ENCODE measurements at regions of chr11 and their contacts with region 1.

Region 1: GRCh38 chr11:93718057-93718563 is 23.2 kb downstream of the TAF1D start:
- DNase-seq: peak in 3 of 4 experiments; percentile 17 to 84 (median 80)
- ATAC-seq: peak; percentile 79
- H3K4me3 ChIP-seq: no peak overlapping the region
- H3K27ac ChIP-seq: peak overlapping the region; percentile 89
- H3K4me1 ChIP-seq: peaks cover 8 to 35% of the 10 kb centered on the region in 2 experiments
- H3K27me3 ChIP-seq: no peaks in the 10 kb centered on the region
- CTCF ChIP-seq: no peak
- EP300 ChIP-seq: peak; percentile 99
- POLR2A ChIP-seq: no peak
- RAD21 ChIP-seq: no peak; a peak in 1 of 4 replicates

Region 2: DNA sequence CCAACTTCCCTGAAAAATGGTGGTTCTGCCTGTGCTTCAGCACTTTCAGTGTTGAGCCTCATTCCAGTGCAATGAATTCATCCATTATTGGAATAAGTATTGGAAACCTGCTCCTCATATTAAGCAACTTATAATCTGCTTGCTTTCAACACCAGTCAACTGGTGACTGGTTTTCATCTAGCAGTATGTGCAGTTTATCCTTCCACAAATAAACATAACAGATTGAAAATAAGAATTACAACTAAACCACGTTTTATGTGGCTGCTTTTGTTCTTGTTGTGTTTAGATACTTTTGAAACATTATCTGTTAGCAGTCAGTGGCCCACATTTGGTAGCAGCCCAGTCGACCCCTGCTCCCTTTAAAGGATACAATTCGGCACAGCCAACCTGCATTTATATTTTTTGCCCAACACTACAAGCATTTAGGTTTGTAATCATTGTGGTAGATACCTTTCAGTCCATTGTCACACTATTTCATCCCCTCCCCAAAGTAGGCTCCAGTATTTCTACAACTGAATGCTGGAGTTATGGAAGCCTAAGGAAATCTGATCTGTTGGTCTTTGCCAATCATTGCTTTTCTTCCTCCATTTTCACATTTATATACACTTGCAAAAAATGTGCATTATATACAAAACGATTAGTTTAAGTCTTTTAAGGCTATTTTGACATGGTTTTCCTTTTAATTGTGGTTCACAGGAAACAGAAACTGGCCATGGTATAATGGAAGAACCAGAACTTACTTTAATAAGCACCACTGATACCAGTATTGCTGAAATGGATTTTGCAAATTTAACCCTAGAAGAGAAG is 10.1 kb after region 1 on chr11:
- CTCF ChIA-PET with region 1: no interaction called
- POLR2A ChIA-PET with region 1: interaction called, 13 read pairs
- in situ Hi-C with region 1: no loop called
- intact Hi-C with region 1: no loop called
- DNase-seq: no peak
- ATAC-seq: peak; percentile 18
- H3K4me3 ChIP-seq: no peak overlapping the region
- H3K27ac ChIP-seq: peak overlapping the region; percentile 21; the same call in 1 of the 3 replicates
- H3K4me1 ChIP-seq: no peaks in the 10 kb centered on the region
- H3K27me3 ChIP-seq: no peaks in the 10 kb centered on the region
- CTCF ChIP-seq: no peak
- EP300 ChIP-seq: no peak
- POLR2A ChIP-seq: no peak
- RAD21 ChIP-seq: no peak